Right ventricle myocardium inferior (tissue), 1 donor: ENCODE measurements at regions of chr6 and their contacts with region 1.

Region 1: DNA sequence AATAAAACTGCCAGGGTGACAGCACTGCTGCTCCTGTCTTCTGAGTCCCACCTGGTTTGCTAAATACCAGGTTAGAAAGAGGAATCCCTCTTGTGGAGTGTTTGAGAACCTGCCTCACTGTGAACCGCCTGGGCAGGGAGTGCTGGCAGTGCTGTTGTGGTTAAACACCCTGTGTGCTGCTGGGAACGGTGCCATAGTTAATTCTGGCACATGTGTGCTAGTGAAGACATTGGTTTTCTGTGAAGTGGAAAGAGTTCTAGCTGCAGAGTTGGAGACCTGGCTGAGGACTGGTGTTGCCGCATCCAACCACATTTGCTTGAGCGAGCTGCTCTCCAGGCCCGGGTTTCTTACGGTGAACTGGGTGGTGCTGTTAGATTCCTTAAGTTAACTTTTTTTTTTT is 72.7 kb downstream of the IGF2R start:
- DNase-seq: no peak
- ATAC-seq: peak; percentile 90

Region 2: DNA sequence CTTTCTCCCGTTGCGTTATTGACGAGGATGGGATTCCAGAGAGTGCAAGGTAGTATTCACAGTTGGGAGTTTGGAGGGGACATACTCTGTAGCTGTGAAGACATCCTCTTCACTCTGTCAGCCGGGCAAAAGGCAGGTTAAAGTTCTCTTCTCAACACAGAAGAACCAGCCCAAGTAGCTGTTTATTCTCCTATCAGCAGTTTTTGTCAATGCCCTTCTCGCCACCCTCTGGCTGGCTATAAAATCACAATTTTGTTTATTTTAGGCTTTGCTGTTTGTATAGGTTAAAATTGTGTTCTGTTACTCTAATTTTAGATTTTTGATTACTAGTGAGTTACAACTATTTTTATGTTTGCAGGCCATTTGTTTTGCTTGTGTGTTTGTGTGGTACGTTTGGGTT is 188.7 kb before region 1 on chr6:
- intact Hi-C with region 1: no loop called
- DNase-seq: no peak
- ATAC-seq: peak; percentile 26

Region 3: GRCh38 chr6:159968440-159969203 is 73.0 kb before region 1 on chr6 and contains the start of gene IGF2R:
- intact Hi-C with region 1: loop called (anchors 1 kb)
- DNase-seq: peak; percentile 98
- ATAC-seq: peak; percentile 94
- total RNA-seq, gene IGF2R: 63.1 TPM

Region 4: DNA sequence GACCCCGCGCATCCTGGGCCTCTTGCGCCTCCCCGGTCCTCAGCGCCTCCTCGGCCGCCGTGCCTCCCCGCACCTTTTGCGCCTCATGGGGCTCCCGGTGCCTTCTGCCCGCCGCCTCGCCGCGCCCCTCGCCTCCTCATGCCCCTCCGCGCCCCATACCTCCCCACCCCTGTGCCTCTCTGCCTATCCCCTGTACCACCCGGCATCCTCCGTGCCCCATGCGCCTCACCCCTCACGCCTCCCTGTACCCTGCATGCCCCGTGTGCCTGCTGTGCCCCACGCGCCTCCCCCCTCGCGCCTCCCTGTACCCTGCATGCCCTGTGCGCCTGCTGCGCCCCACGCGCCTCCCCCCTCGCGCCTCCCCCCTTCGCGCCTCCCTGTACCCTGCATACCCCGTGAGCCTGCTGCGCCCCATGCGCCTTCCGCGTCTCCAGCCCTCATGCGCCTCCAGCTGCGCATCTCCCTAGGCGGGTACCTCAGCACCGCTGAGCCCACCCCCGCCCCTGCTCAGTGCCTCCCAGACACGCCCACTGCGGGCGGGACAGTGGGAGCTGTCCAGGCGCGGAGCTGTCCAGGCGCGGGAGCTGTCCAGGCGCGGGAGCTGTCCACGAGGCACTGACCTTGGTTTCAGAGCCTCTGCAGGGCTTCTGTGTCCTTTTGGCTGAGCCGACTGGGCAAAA is 35.6 kb before region 1 on chr6:
- intact Hi-C with region 1: no loop called
- DNase-seq: peak; percentile 72
- ATAC-seq: peak; percentile 84